Natural killer cell (primary cell): ENCODE measurements at regions of chr7 and their contacts with region 1.

Region 1: GRCh38 chr7:38335492-38336147 is 62.2 kb upstream of the TARP start:
- DNase-seq: peak; percentile 90
- ATAC-seq: peak; percentile 69 to 92 (median 79)
- H3K4me3 ChIP-seq: peak overlapping the region; percentile 70
- H3K4me3 Mint-ChIP-seq: peak overlapping the region; percentile 93
- H3K27ac ChIP-seq: peak overlapping the region; percentile 80
- H3K27ac Mint-ChIP-seq: peak overlapping the region; percentile 90 to 93
- H3K4me1 ChIP-seq: peaks cover 38% of the 10 kb centered on the region
- H3K4me1 Mint-ChIP-seq: peaks cover 82 to 87% of the 10 kb centered on the region in 2 donors
- H3K27me3 ChIP-seq: no peaks in the 10 kb centered on the region
- H3K27me3 Mint-ChIP-seq: no peaks in the 10 kb centered on the region
- CTCF ChIP-seq: peak; percentile 98

Region 2: GRCh38 chr7:38178004-38178694 is 157.5 kb before region 1 on chr7 and contains the start of gene STARD3NL:
- intact Hi-C with region 1: loop called (anchors 5 kb)
- DNase-seq: peak; percentile 83 to 99
- ATAC-seq: peak; percentile 92 to 98 (median 96)
- H3K4me3 ChIP-seq: peak within 1 kb of the TSS; percentile 100
- H3K4me3 Mint-ChIP-seq: peak within 1 kb of the TSS; percentile 98
- H3K27ac ChIP-seq: peak within 1 kb of the TSS; percentile 98
- H3K27ac Mint-ChIP-seq: peak within 1 kb of the TSS; percentile 87 to 98
- H3K4me1 ChIP-seq: peaks cover 9% of the 10 kb centered on the region
- H3K4me1 Mint-ChIP-seq: peaks cover 43 to 49% of the 10 kb centered on the region in 2 donors
- H3K27me3 ChIP-seq: no peaks in the 10 kb centered on the region
- H3K27me3 Mint-ChIP-seq: peaks cover 7 to 15% of the 10 kb centered on the region in 2 donors
- CTCF ChIP-seq: peak; percentile 25
- total RNA-seq, gene STARD3NL: 30.6 to 38.6 (median 38.3) TPM

Region 3: GRCh38 chr7:38232502-38233366 is 102.9 kb before region 1 on chr7:
- intact Hi-C with region 1: loop called (anchors 1 kb)
- DNase-seq: peak; percentile 82 to 90
- ATAC-seq: peak; percentile 68 to 89 (median 85)
- H3K4me3 ChIP-seq: no peak overlapping the region
- H3K4me3 Mint-ChIP-seq: peak overlapping the region; percentile 69
- H3K27ac ChIP-seq: peak overlapping the region; percentile 91
- H3K27ac Mint-ChIP-seq: peak overlapping the region; percentile 95 to 96
- H3K4me1 ChIP-seq: peaks cover 78% of the 10 kb centered on the region
- H3K4me1 Mint-ChIP-seq: peaks cover 91 to 97% of the 10 kb centered on the region in 2 donors
- H3K27me3 ChIP-seq: no peaks in the 10 kb centered on the region
- H3K27me3 Mint-ChIP-seq: no peaks in the 10 kb centered on the region
- CTCF ChIP-seq: no peak

Region 4: GRCh38 chr7:38306171-38306570 is 29.4 kb before region 1 on chr7:
- intact Hi-C with region 1: loop called (anchors 2 kb)
- DNase-seq: no peak
- ATAC-seq: no peak
- H3K4me3 ChIP-seq: no peak overlapping the region
- H3K4me3 Mint-ChIP-seq: peak overlapping the region; percentile 99
- H3K27ac ChIP-seq: peak overlapping the region; percentile 97
- H3K27ac Mint-ChIP-seq: peak overlapping the region; percentile 95 to 99
- H3K4me1 ChIP-seq: peaks cover 67% of the 10 kb centered on the region
- H3K4me1 Mint-ChIP-seq: peaks cover 89% of the 10 kb centered on the region in 2 donors
- H3K27me3 ChIP-seq: no peaks in the 10 kb centered on the region
- H3K27me3 Mint-ChIP-seq: no peaks in the 10 kb centered on the region
- CTCF ChIP-seq: no peak

Region 5: GRCh38 chr7:38351601-38352000 is 16.0 kb after region 1 on chr7:
- intact Hi-C with region 1: loop called (anchors 2 kb)
- DNase-seq: no peak
- ATAC-seq: no peak
- H3K4me3 ChIP-seq: no peak overlapping the region
- H3K4me3 Mint-ChIP-seq: no peak overlapping the region
- H3K27ac ChIP-seq: no peak overlapping the region
- H3K27ac Mint-ChIP-seq: no peak overlapping the region
- H3K4me1 ChIP-seq: peaks cover 37% of the 10 kb centered on the region
- H3K4me1 Mint-ChIP-seq: peaks cover 8 to 58% of the 10 kb centered on the region in 2 donors
- H3K27me3 ChIP-seq: no peaks in the 10 kb centered on the region
- H3K27me3 Mint-ChIP-seq: no peaks in the 10 kb centered on the region
- CTCF ChIP-seq: no peak

Region 6: DNA sequence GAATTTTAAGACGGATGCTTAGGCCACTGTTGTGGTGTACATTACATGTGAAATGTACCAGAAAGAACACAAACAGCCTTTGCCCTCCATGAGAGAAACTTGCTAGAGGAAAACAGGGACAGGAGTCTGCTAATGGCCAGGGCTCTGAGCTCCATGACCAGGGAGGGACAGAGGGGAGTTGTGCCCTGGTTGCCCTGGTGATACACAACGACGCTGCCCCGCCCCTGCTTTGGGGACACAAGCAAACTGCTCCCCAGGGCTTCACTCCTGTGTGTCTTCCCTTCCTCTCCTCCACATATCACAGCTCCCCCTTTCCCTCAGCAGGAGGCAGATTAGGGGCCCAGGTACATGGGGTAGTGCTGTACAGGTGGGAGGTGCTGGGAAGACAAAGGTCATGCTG is 259.3 kb after region 1 on chr7:
- intact Hi-C with region 1: no loop called
- DNase-seq: no peak
- ATAC-seq: no peak
- H3K4me3 ChIP-seq: no peak overlapping the region
- H3K4me3 Mint-ChIP-seq: no peak overlapping the region
- H3K27ac ChIP-seq: no peak overlapping the region
- H3K27ac Mint-ChIP-seq: no peak overlapping the region
- H3K4me1 ChIP-seq: no peaks in the 10 kb centered on the region
- H3K4me1 Mint-ChIP-seq: no peaks in the 10 kb centered on the region
- H3K27me3 ChIP-seq: peaks cover 2% of the 10 kb centered on the region
- H3K27me3 Mint-ChIP-seq: peaks cover 11 to 30% of the 10 kb centered on the region in 2 donors
- CTCF ChIP-seq: no peak

Region 7: DNA sequence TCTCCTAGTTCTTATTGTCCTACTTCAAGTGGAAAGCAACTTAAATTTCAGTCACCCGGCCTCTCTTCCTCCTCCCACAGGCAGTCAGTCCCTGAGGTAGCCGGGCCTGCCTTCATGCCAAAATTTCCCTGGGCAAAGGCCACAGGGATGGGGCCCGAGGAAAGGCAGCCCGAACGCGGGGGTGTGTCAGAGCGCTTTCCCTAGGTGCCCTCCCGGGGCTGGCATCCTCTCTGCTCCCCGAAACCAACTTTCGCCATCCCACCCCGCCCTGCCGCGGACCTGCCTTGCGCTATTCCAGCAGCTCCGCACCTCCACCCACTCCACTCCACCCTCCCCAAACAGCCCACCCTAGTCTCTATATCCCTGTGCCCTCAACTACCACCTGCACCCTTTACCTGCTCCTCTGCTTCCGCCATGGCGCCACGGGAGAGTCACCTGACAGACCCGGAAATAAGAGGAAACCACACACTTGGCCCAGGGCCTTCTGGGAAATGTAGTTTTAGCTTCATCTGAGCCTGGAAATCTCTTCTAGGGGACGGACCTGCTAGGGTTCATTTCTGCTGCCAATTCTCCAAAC is 573.2 kb after region 1 on chr7 and contains the start of gene VPS41:
- intact Hi-C with region 1: no loop called
- DNase-seq: peak; percentile 63 to 90
- ATAC-seq: peak; percentile 93 to 99 (median 98)
- H3K4me3 ChIP-seq: peak within 1 kb of the TSS; percentile 76
- H3K4me3 Mint-ChIP-seq: peak within 1 kb of the TSS; percentile 95
- H3K27ac ChIP-seq: peak within 1 kb of the TSS; percentile 25
- H3K27ac Mint-ChIP-seq: peak within 1 kb of the TSS; percentile 86 to 95
- H3K4me1 ChIP-seq: peaks cover 4% of the 10 kb centered on the region
- H3K4me1 Mint-ChIP-seq: peaks cover 23 to 39% of the 10 kb centered on the region in 2 donors
- H3K27me3 ChIP-seq: no peaks in the 10 kb centered on the region
- H3K27me3 Mint-ChIP-seq: peaks cover 3 to 27% of the 10 kb centered on the region in 2 donors
- CTCF ChIP-seq: no peak
- total RNA-seq, gene VPS41: 67.3 to 81.8 (median 78.9) TPM